ENCODE measurements at regions of chr1 and their contacts with region 1.

Region 1: GRCh38 chr1:45303582-45304310 is 22.9 kb upstream of the HPDL start:
- DNase-seq: peak; percentile 89 to 99
- H3K4me3 ChIP-seq: peak overlapping the region; percentile 69 to 80
- H3K27ac ChIP-seq: peak overlapping the region; percentile 82 to 88
- H3K4me1 ChIP-seq: peaks cover 0 to 3% of the 10 kb centered on the region in 2 donors
- H3K27me3 ChIP-seq: no peaks in the 10 kb centered on the region
- CTCF ChIP-seq: peak; percentile 52 to 77 (median 65)

Region 2: GRCh38 chr1:44631647-44632539 is 671.9 kb before region 1 on chr1:
- intact Hi-C with region 1: loop called (anchors 5 kb)
- DNase-seq: peak; percentile 62 to 94
- H3K4me3 ChIP-seq: peak overlapping the region; percentile 84 to 96
- H3K27ac ChIP-seq: peak overlapping the region; percentile 95 to 97
- H3K4me1 ChIP-seq: peaks cover 12 to 13% of the 10 kb centered on the region in 2 donors
- H3K27me3 ChIP-seq: no peaks in the 10 kb centered on the region
- CTCF ChIP-seq: peak in 1 of 3 experiments; percentile 14

Region 3: GRCh38 chr1:44775078-44775929 is 528.4 kb before region 1 on chr1 and contains the start of gene RPS8:
- intact Hi-C with region 1: loop called (anchors 5 kb)
- DNase-seq: peak; percentile 56 to 96
- H3K4me3 ChIP-seq: peak within 1 kb of the TSS; percentile 60 to 78
- H3K27ac ChIP-seq: peak within 1 kb of the TSS; percentile 89 to 93
- H3K4me1 ChIP-seq: peaks cover 8 to 9% of the 10 kb centered on the region in 2 donors
- H3K27me3 ChIP-seq: no peaks in the 10 kb centered on the region
- CTCF ChIP-seq: no peak
- total RNA-seq, gene RPS8: 1,693 TPM

Region 4: DNA sequence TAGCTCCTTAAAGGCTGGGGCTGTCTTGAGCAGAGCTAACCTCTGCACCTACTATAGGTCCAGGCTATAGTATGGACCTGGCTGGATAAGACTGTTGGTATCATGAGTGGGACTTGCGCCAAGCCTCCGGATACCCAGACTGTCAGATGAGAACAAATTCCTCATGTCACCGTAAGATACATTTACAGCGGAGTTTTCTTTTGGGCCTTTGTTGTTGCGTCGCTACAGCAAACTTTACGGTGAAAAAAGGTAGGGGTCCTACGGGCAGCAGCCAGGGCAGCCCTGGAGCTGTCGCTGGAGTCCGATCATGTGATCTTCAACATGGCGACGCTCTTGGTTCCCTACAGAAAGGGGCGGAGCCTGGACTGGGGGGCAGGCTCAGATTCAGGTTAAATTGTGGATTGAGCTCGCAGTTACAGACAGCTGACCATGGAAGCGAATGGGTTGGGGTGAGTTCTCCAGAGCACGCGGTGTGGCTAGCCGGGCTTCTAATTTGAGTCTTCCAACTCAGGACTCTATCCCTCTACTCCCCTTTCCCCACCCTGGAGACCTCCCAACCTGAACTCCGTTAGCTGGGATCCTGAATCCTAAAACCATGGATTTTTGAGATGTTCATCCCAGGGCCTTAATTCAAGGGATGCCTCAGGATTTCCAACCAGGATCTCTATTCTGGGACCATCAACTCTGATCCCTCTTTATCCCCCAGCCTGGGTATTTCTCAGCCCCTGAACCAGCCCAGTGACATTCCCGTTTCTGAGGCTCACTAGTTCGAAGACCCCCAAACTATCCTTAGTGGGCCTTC is 291.7 kb before region 1 on chr1 and contains the start of gene UROD:
- intact Hi-C with region 1: loop called (anchors 1 kb)
- DNase-seq: peak; percentile 77 to 95
- H3K4me3 ChIP-seq: peak within 1 kb of the TSS; percentile 70 to 86
- H3K27ac ChIP-seq: peak within 1 kb of the TSS; percentile 65 to 81
- H3K4me1 ChIP-seq: peaks cover 20 to 31% of the 10 kb centered on the region in 2 donors
- H3K27me3 ChIP-seq: no peaks in the 10 kb centered on the region
- CTCF ChIP-seq: no peak
- total RNA-seq, gene UROD: 150 TPM

Region 5: DNA sequence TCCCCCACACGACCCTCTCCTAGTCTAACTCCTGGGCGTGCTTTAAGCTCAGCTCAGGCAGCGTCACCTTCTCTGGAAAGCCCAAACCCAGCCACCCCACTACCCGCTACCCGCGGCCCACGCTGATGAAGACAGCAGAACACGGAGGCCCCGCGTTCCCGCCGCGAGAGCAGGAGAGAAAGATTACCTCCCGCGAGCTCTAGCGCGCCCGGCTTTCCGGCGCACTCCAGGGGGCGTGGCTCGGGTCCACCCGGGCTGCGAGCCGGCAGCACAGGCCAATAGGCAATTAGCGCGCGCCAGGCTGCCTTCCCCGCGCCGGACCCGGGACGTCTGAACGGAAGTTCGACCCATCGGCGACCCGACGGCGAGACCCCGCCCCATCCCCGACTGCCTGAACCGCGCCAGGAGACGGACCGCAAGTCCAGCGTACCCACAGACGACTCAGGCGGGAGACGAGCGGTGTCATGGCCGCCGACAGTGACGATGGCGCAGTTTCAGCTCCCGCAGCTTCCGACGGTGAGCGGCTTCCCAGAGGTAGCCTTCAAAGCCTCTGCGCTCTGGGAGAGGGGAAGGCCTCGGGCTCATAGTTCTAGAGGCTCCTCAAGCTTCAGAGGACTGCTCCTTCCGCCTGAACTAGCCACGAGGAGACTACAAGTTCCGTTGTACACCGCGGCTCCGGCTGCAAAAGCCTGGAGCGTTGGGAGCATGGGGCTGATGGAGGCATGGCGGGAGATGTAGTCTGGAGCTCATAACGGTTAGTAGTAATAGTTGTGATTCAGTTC is 36.2 kb after region 1 on chr1 and contains the starts of genes MUTYH and TOE1:
- intact Hi-C with region 1: loop called (anchors 1 kb)
- DNase-seq: peak; percentile 64 to 95
- H3K4me3 ChIP-seq: peak within 1 kb of the TSS; percentile 84 to 87
- H3K27ac ChIP-seq: peak within 1 kb of the TSS; percentile 98
- H3K4me1 ChIP-seq: peaks cover 11 to 19% of the 10 kb centered on the region in 2 donors
- H3K27me3 ChIP-seq: no peaks in the 10 kb centered on the region
- CTCF ChIP-seq: peak in 1 of 3 experiments; percentile 9
- total RNA-seq, gene MUTYH: 1.8 TPM
- total RNA-seq, gene TOE1: 6.9 TPM

Measured in ascending aorta (tissue), 2 donors.